WTC11 (cell line): ENCODE measurements at regions of chr17 and their contacts with region 1.

Region 1: GRCh38 chr17:78112518-78113226 is 15.9 kb downstream of the TMC6 start:
- DNase-seq: peak; percentile 94
- ATAC-seq: peak; percentile 87
- H3K4me3 Mint-ChIP-seq: no peak overlapping the region
- H3K27ac Mint-ChIP-seq: peak overlapping the region; percentile 99
- H3K4me1 Mint-ChIP-seq: peaks cover 2% of the 10 kb centered on the region; the same call in 1 of the 2 replicates
- H3K27me3 Mint-ChIP-seq: no peaks in the 10 kb centered on the region
- CTCF ChIP-seq: peak; percentile 99

Region 2: DNA sequence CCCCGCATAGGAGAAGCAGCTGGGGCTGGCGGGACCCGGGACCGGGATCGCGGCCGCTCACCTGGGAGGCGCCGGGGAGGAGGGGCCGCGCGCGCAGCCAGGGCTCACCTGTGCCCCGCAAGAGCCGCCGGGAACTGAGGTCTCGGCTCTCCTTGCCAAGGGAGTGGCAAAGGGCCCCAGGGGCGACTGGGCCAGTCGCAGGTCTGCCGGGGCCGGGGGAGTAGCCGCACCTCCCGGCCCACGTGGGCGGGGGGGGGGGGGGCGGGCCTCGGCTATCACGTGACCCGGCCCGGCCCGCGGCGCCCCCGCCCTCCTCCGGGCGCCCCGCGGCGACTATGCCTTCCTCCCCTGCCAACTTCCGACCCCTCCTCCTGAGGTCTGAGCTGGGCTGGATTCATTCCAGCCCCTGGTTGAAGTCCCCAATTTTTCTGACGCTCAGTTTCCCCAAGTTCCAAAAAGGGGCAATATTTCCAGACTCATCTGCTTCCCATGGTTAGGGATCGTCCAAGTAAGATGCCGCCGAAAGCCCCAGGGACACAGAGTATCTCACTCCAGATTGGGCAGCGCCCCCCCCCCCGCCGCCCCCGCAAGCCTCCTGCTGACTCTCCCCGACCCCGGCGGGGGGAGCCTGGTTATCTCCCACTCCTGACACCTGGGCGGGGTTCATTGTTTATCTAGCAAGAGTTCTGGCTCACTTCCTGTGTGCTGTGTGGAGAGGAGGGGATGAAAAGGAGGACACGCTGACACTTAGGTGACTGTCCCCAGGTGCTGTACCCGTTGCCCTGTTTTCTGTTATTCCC is 16.1 kb after region 1 on chr17 and contains the start of gene TMC6:
- CTCF ChIA-PET with region 1: interaction called, 24 read pairs
- POLR2A ChIA-PET with region 1: no interaction called
- DNase-seq: peak; percentile 82
- ATAC-seq: peak; percentile 70
- H3K4me3 Mint-ChIP-seq: peak within 1 kb of the TSS; percentile 80
- H3K27ac Mint-ChIP-seq: no peak within 1 kb of the TSS
- H3K4me1 Mint-ChIP-seq: peaks cover 31% of the 10 kb centered on the region
- H3K27me3 Mint-ChIP-seq: peaks cover 13% of the 10 kb centered on the region
- CTCF ChIP-seq: no peak
- total RNA-seq, gene TMC6: 90.9 to 120 TPM (median 93.2 TPM) in 3 replicates

Region 3: DNA sequence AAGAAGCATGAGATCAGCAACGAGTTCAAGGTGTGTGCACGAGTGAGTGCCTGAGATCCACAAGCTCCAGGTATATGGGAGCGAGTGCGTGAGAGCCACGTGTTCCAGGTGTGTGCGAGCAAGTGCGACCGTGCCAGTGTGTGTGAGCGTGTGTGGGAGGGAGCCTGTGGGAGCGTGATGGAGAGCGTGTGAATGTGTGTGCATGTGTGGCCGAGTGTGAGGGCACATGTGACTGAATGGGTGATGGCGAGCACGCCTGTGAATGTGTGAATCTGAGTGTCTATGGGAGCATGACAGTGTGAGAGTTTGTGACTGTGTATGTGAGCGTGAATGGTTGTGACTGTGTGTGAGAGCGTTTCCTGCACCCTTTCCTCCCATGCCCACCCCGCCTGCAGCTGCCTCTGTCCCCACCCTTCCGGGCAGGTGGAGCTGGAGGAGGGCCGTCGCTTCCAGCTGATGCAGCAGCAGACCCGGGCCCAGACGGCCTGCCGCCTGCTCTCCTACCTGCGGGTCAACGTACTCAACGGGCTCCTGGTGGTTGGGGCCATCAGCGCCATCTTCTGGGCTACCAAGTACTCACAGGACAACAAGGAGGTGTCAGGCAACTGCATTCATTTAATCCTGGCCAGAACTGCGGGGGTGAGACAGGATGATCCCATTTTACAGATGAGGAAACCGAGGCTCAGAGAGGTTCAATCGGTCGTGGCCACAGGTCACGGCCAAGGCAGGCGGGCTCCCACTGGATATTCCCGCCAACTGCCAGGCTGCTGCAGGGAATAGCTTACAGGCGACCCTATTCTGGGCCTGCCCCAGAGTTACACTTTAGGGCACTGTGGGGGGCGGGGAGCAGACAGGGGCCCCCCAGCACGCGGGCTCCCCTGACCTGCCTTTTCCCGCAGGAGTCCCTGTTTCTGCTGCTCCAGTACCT is 21.6 kb after region 1 on chr17:
- CTCF ChIA-PET with region 1: interaction called, 24 read pairs
- POLR2A ChIA-PET with region 1: no interaction called
- DNase-seq: peak; percentile 89
- ATAC-seq: peak; percentile 75
- H3K4me3 Mint-ChIP-seq: no peak overlapping the region
- H3K27ac Mint-ChIP-seq: no peak overlapping the region
- H3K4me1 Mint-ChIP-seq: peaks cover 40% of the 10 kb centered on the region
- H3K27me3 Mint-ChIP-seq: peaks cover 17% of the 10 kb centered on the region
- CTCF ChIP-seq: peak; percentile 40; the same call in 1 of the 2 replicates

Region 4: GRCh38 chr17:78206298-78206697 is 93.6 kb after region 1 on chr17:
- CTCF ChIA-PET with region 1: no interaction called
- POLR2A ChIA-PET with region 1: interaction called, 10 read pairs
- DNase-seq: no peak
- ATAC-seq: peak; percentile 88
- H3K4me3 Mint-ChIP-seq: no peak overlapping the region
- H3K27ac Mint-ChIP-seq: no peak overlapping the region
- H3K4me1 Mint-ChIP-seq: no peaks in the 10 kb centered on the region
- H3K27me3 Mint-ChIP-seq: no peaks in the 10 kb centered on the region
- CTCF ChIP-seq: no peak

Region 5: GRCh38 chr17:78300962-78301822 is 188.5 kb after region 1 on chr17:
- CTCF ChIA-PET with region 1: no interaction called
- POLR2A ChIA-PET with region 1: no interaction called
- DNase-seq: no peak
- ATAC-seq: no peak
- H3K4me3 Mint-ChIP-seq: no peak overlapping the region
- H3K27ac Mint-ChIP-seq: no peak overlapping the region
- H3K4me1 Mint-ChIP-seq: 0 out of 2 replicates have a peak, but pooled peaks cover 4% of the 10 kb centered on the region
- H3K27me3 Mint-ChIP-seq: no peaks in the 10 kb centered on the region
- CTCF ChIP-seq: no peak